Activated CD4-positive, alpha-beta T cell treated with anti-CD3 and anti-CD28 coated beads for 36 hours (primary cell): ENCODE measurements at regions of chr12 and their contacts with region 1.

Region 1: GRCh38 chr12:28223025-28223554 is 32.8 kb downstream of the CCDC91 start:
- DNase-seq: peak; percentile 25
- ATAC-seq: peak; percentile 94
- H3K4me3 Mint-ChIP-seq: peak overlapping the region; percentile 29
- H3K27ac Mint-ChIP-seq: peak overlapping the region; percentile 77
- H3K4me1 Mint-ChIP-seq: peaks cover 48% of the 10 kb centered on the region
- H3K27me3 Mint-ChIP-seq: no peaks in the 10 kb centered on the region

Region 2: GRCh38 chr12:28253161-28253641 is 30.1 kb after region 1 on chr12:
- CTCF ChIA-PET with region 1: interaction called, 3 read pairs
- POLR2A ChIA-PET with region 1: no interaction called
- intact Hi-C with region 1: loop called (anchors 1 kb)
- DNase-seq: peak; percentile 72
- ATAC-seq: peak; percentile 95
- H3K4me3 Mint-ChIP-seq: peak overlapping the region; percentile 34
- H3K27ac Mint-ChIP-seq: peak overlapping the region; percentile 87
- H3K4me1 Mint-ChIP-seq: peaks cover 69% of the 10 kb centered on the region
- H3K27me3 Mint-ChIP-seq: no peaks in the 10 kb centered on the region